Gastrocnemius medialis (tissue), 4 donors: ENCODE measurements at regions of chr4 and their contacts with region 1.

Region 1: DNA sequence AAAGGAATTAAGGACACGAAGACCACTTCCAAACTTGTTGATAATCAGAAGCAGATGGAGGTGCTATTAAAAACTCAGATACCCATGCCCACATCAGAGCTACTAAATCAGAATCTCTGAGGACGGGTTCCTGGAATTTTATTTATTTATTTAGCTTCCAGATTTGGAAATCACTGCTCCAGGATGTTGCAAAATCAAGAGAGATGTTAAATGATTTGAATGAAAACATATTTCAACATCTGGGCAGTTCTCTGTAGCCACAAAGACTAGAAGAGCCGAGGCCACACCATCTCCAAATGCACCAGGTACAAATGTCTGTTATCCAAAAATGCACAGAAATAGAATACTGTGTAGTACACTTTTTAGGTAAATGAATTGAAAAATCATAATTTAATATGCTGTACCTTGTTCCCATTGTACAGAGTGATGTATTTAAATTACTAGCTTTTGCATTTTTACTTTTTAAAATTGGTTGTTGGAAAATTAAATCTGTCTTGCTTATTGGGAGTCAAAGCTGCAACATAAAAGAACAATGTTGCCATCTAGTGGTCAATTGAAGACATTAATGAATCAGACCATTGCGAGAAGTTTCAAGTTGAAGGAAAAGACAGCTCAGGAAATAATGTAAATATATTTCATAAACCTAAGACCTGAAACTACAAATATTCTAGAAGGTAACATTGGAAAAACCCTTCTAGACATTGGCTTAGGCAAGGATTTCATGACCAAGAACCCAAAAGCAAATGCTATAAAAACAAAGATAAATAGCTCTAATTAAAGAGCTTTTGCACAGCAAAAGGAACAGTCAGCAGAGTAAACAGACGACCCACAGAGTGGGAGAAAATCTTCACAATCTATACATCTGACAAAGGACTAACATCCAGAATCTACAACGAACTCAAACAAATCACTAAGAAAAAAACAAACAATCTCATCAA is 151.3 kb upstream of the TTC29 start:
- DNase-seq: no peak
- ATAC-seq: peak; percentile 52 to 55
- H3K4me3 ChIP-seq: no peak overlapping the region
- H3K27ac ChIP-seq: no peak overlapping the region
- H3K4me1 ChIP-seq: no peaks in the 10 kb centered on the region
- H3K27me3 ChIP-seq: no peaks in the 10 kb centered on the region
- CTCF ChIP-seq: peak; percentile 45 to 75 (median 65)
- POLR2A ChIP-seq: no peak

Region 2: GRCh38 chr4:146095091-146095690 is 1001.7 kb before region 1 on chr4:
- in situ Hi-C with region 1: no loop called
- intact Hi-C with region 1: loop called (anchors 10 kb)
- DNase-seq: no peak
- ATAC-seq: no peak
- H3K4me3 ChIP-seq: no peak overlapping the region
- H3K27ac ChIP-seq: no peak overlapping the region
- H3K4me1 ChIP-seq: no peaks in the 10 kb centered on the region
- H3K27me3 ChIP-seq: no peaks in the 10 kb centered on the region
- CTCF ChIP-seq: peak in 3 of 5 experiments; percentile 29 to 65 (median 51)
- POLR2A ChIP-seq: no peak

Region 3: GRCh38 chr4:146342600-146343192 is 754.2 kb before region 1 on chr4:
- in situ Hi-C with region 1: loop called (anchors 25 kb)
- intact Hi-C with region 1: loop called (anchors 5 kb)
- DNase-seq: no peak
- ATAC-seq: no peak
- H3K4me3 ChIP-seq: no peak overlapping the region
- H3K27ac ChIP-seq: no peak overlapping the region
- H3K4me1 ChIP-seq: no peaks in the 10 kb centered on the region
- H3K27me3 ChIP-seq: no peaks in the 10 kb centered on the region
- CTCF ChIP-seq: peak in 4 of 5 experiments; percentile 28 to 75 (median 54)
- POLR2A ChIP-seq: no peak

Region 4: GRCh38 chr4:147029296-147029695 is 67.6 kb before region 1 on chr4:
- in situ Hi-C with region 1: loop called in 1 of 4 experiments (anchors 10 kb)
- intact Hi-C with region 1: no loop called
- DNase-seq: no peak
- ATAC-seq: no peak
- H3K4me3 ChIP-seq: no peak overlapping the region
- H3K27ac ChIP-seq: no peak overlapping the region
- H3K4me1 ChIP-seq: no peaks in the 10 kb centered on the region
- H3K27me3 ChIP-seq: no peaks in the 10 kb centered on the region
- CTCF ChIP-seq: no peak
- POLR2A ChIP-seq: no peak

Region 5: DNA sequence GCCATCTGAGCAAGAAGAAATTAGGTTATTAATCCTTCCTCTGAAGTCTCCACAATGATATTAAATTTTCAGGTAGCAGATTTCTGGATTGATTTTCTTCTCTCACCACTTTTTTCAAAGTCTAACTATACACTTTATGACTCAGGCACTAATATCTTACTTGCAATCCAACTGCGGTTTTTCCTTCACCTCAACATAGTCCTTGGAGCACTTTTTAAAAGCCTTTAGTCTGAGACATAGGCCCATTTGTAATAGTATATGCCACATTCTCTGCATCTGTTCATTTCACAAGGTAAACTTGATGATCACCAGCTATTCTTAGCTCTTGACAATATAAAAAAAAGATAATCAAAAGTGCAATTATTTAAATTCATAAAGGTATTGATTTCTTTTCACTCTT is 328.1 kb after region 1 on chr4:
- in situ Hi-C with region 1: no loop called
- intact Hi-C with region 1: no loop called
- DNase-seq: no peak
- ATAC-seq: no peak
- H3K4me3 ChIP-seq: no peak overlapping the region
- H3K27ac ChIP-seq: no peak overlapping the region
- H3K4me1 ChIP-seq: no peaks in the 10 kb centered on the region
- H3K27me3 ChIP-seq: no peaks in the 10 kb centered on the region
- CTCF ChIP-seq: no peak
- POLR2A ChIP-seq: no peak